ENCODE measurements at regions of chr2 and their contacts with region 1.

Region 1: GRCh38 chr2:209694748-209695147 is 76.9 kb upstream of the UNC80 start:
- DNase-seq: no peak
- H3K4me3 ChIP-seq: no peak overlapping the region
- H3K27ac ChIP-seq: no peak overlapping the region
- H3K4me1 ChIP-seq: no peaks in the 10 kb centered on the region
- H3K27me3 ChIP-seq: no peaks in the 10 kb centered on the region
- CTCF ChIP-seq: no peak

Region 2: DNA sequence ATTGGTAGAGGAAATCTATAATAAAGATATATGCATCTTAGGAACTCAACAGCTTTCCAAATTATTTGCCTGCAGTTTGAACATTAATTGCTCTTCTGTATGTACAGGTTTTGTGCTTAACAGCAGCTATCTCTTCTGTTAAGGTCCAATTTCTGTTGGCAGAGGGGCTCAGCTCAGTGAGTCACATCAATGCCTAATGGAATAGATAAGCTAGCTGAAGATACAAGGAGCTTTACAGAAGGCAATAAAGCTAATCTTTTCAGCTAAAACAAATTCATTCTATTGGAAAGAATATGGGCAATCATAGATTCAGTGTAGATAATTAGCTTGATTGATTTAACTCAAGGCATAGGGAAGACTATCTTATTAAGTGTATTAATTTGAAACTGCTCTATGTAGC is 18.5 kb after region 1 on chr2:
- CTCF ChIA-PET with region 1: no interaction called
- dilution Hi-C with region 1: no loop called
- in situ Hi-C with region 1: no loop called
- intact Hi-C with region 1: loop called (anchors 1 kb)
- DNase-seq: no peak
- H3K4me3 ChIP-seq: no peak overlapping the region
- H3K27ac ChIP-seq: no peak overlapping the region
- H3K4me1 ChIP-seq: no peaks in the 10 kb centered on the region
- H3K27me3 ChIP-seq: no peaks in the 10 kb centered on the region
- CTCF ChIP-seq: no peak

Region 3: DNA sequence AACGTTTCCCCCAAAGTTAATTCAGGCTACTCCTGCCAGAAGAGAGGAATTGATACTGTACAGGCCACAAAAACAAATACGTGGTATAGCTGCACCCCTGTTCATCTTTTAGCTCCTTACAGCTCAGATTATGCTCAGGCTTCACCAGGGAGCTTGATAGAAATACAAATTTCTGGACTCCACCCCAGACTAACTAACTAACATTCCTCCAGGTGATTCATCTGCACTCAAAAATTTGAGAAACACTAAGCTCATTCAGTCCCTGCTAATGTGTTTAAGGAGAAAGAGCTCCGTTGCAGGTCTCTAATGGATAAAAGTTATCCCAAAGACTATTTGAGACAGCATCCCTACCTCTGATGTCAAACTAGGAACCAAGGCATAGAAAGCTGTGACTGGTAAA is 40.1 kb after region 1 on chr2:
- CTCF ChIA-PET with region 1: no interaction called
- dilution Hi-C with region 1: no loop called
- in situ Hi-C with region 1: no loop called
- intact Hi-C with region 1: no loop called
- DNase-seq: peak; percentile 14
- H3K4me3 ChIP-seq: no peak overlapping the region
- H3K27ac ChIP-seq: no peak overlapping the region
- H3K4me1 ChIP-seq: peaks cover 9% of the 10 kb centered on the region
- H3K27me3 ChIP-seq: no peaks in the 10 kb centered on the region
- CTCF ChIP-seq: no peak